ENCODE measurements at regions of chr2 and their contacts with region 1.

Region 1: GRCh38 chr2:224449212-224450147 is 47.6 kb upstream of the FAM124B start:
- DNase-seq: peak; percentile 38
- H3K4me3 ChIP-seq: no peak overlapping the region
- H3K27ac ChIP-seq: no peak overlapping the region
- H3K4me1 ChIP-seq: no peaks in the 10 kb centered on the region
- H3K27me3 ChIP-seq: no peaks in the 10 kb centered on the region
- CTCF ChIP-seq: peak; percentile 75

Region 2: GRCh38 chr2:224650815-224651439 is 201.4 kb after region 1 on chr2:
- CTCF ChIA-PET with region 1: no interaction called
- POLR2A ChIA-PET with region 1: no interaction called
- intact Hi-C with region 1: loop called (anchors 10 kb)
- DNase-seq: peak; percentile 70
- H3K4me3 ChIP-seq: no peak overlapping the region
- H3K27ac ChIP-seq: no peak overlapping the region
- H3K4me1 ChIP-seq: peaks cover 4% of the 10 kb centered on the region
- H3K27me3 ChIP-seq: no peaks in the 10 kb centered on the region
- CTCF ChIP-seq: peak; percentile 83

Measured in A673 (cell line).